HEK293 (cell line): ENCODE measurements at regions of chr17 and their contacts with region 1.

Region 1: GRCh38 chr17:4199818-4200402 is 56.9 kb downstream of the CYB5D2 start:
- H3K4me3 ChIP-seq: no peak overlapping the region
- H3K27ac ChIP-seq: no peak overlapping the region
- H3K4me1 ChIP-seq: no peaks in the 10 kb centered on the region
- CTCF ChIP-seq: peak; percentile 74

Region 2: GRCh38 chr17:3983606-3984484 is 216.1 kb before region 1 on chr17:
- CTCF ChIA-PET with region 1: no interaction called
- POLR2A ChIA-PET with region 1: no interaction called
- H3K4me3 ChIP-seq: no peak overlapping the region
- H3K27ac ChIP-seq: no peak overlapping the region
- H3K4me1 ChIP-seq: no peaks in the 10 kb centered on the region
- CTCF ChIP-seq: no peak

Region 3: DNA sequence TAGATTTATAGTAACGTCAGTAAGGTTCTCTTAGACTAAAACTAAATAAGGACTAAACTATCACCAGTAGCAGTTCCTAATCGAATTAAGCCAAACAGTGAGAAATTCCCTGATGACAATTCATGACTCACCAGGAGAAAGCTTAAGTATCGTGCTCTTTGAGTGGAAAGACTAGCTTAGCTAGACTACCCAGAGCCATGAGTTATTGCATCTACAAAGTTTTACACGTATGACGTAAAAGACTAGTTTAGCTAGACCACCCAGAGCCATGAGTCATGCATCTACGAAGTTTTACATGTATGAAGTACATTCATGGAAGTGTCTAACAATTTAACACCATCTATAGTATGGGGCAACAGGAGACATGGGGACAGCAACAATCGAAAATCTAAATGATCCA is 129.9 kb after region 1 on chr17:
- CTCF ChIA-PET with region 1: no interaction called
- POLR2A ChIA-PET with region 1: no interaction called
- H3K4me3 ChIP-seq: no peak overlapping the region
- H3K27ac ChIP-seq: no peak overlapping the region
- H3K4me1 ChIP-seq: peaks cover 37% of the 10 kb centered on the region
- CTCF ChIP-seq: no peak

Region 4: GRCh38 chr17:4340914-4341615 is 141.2 kb after region 1 on chr17:
- CTCF ChIA-PET with region 1: no interaction called
- POLR2A ChIA-PET with region 1: no interaction called
- H3K4me3 ChIP-seq: no peak overlapping the region
- H3K27ac ChIP-seq: no peak overlapping the region
- H3K4me1 ChIP-seq: peaks cover 38% of the 10 kb centered on the region
- CTCF ChIP-seq: no peak

Region 5: DNA sequence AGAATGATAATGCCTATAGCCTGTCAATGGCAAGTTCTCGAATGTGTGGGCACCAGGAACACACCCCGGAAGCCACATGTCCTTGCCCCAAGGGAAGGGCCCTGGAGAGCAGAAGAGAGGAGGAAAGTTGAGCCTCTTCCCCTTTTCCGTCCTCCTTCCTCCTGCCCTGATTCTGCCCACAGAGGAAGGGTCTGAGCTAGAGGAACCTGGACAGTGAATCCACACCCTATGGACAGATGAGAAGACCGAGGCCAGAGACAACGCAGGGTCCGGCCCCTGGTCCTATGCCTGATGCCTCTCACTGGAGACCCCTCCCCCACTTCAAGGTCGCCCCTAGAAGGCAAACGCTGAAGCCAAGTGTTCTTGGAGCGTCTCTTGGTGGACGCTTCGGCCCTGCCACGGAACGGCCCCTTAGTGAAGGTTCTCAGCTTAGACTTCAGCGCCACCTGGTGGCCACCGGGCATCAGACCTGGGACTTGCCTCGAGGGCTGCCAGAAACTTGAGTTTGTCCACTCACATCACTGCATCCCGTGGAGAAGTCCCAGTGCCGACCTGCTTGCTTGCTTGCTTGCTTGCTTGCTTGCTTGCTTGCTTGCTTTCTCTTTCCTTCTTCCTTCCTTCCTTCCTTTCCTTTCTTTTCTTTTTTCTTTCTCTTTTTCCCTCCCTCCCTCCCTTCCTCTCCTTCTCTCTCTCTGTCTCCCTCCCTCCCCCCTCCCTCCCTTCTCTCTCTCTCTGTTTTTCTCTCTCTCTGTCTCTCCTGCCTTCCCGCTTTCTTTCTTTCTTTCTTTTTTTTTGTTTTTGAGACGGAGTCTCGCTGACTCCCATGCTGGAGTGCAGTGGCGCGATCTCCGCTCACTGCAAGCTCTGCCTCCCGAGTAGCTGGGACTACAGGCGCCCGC is 213.3 kb after region 1 on chr17:
- CTCF ChIA-PET with region 1: interaction called, 25 read pairs
- POLR2A ChIA-PET with region 1: no interaction called
- H3K4me3 ChIP-seq: no peak overlapping the region
- H3K27ac ChIP-seq: no peak overlapping the region
- H3K4me1 ChIP-seq: no peaks in the 10 kb centered on the region
- CTCF ChIP-seq: peak; percentile 95